GM12878 (cell line): ENCODE measurements at regions of chr2 and their contacts with region 1.

Region 1: DNA sequence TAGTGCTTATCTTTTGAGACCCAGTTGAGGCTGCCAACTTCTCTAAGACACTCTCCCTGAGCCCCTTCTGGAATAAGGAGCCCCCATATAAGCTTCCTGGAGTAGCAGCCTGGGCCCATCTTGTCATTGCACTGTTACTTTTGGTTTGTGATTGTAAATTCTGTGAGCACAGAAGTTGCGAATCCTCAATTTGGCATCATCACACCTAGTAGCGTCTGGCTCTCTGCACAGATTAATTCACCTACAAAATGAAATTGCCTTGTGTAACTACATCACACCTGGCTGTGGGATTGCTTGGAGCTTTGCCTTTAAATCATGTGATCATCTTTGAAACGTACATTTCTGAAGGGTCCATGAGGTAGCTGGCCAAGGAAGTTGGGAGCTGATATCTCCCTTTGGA is 193.2 kb upstream of the BCL2L11 start:
- DNase-seq: no peak
- ATAC-seq: no peak
- H3K4me3 ChIP-seq: no peak overlapping the region
- H3K27ac ChIP-seq: no peak overlapping the region
- H3K4me1 ChIP-seq: no peaks in the 10 kb centered on the region
- H3K27me3 ChIP-seq: no peaks in the 10 kb centered on the region
- CTCF ChIP-seq: no peak
- EP300 ChIP-seq: no peak
- POLR2A ChIP-seq: no peak
- RAD21 ChIP-seq: no peak

Region 2: GRCh38 chr2:110960954-110961353 is 33.4 kb after region 1 on chr2:
- CTCF ChIA-PET with region 1: no interaction called
- POLR2A ChIA-PET with region 1: no interaction called
- RAD21 ChIA-PET with region 1: no interaction called
- SMC1A ChIA-PET with region 1: no interaction called
- in situ Hi-C with region 1: no loop called
- intact Hi-C with region 1: loop called (anchors 2 kb)
- DNase-seq: no peak
- ATAC-seq: no peak
- H3K4me3 ChIP-seq: no peak overlapping the region
- H3K27ac ChIP-seq: no peak overlapping the region
- H3K4me1 ChIP-seq: no peaks in the 10 kb centered on the region
- H3K27me3 ChIP-seq: no peaks in the 10 kb centered on the region; a peak in 1 of 4 replicates
- CTCF ChIP-seq: no peak
- EP300 ChIP-seq: no peak
- POLR2A ChIP-seq: no peak
- RAD21 ChIP-seq: no peak

Region 3: DNA sequence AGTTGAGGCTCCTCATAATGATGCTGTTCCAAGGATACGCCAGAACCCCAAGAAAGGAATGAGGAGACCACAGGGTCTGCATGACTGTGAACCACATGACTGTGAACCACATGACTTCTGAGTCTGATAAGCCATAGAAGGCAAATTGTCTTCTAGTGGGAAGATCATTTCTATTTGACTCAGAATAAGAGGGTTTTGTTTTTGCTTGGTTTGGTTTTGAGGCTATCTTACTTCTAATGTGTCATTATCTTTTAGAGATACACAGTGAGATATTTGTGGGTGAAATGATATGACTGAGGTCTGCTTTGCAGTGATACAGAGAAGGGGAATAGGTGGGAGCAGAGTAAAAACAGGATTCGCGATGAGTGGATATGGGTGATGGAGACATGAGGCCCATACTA is 164.3 kb after region 1 on chr2:
- CTCF ChIA-PET with region 1: no interaction called
- POLR2A ChIA-PET with region 1: no interaction called
- RAD21 ChIA-PET with region 1: no interaction called
- SMC1A ChIA-PET with region 1: no interaction called
- in situ Hi-C with region 1: no loop called
- intact Hi-C with region 1: no loop called
- DNase-seq: no peak
- ATAC-seq: peak; percentile 52
- H3K4me3 ChIP-seq: no peak overlapping the region
- H3K27ac ChIP-seq: no peak overlapping the region
- H3K4me1 ChIP-seq: no peaks in the 10 kb centered on the region
- H3K27me3 ChIP-seq: peaks cover 3% of the 10 kb centered on the region in 2 experiments; a peak in 2 of 4 replicates
- CTCF ChIP-seq: no peak
- EP300 ChIP-seq: no peak
- POLR2A ChIP-seq: no peak
- RAD21 ChIP-seq: no peak